ENCODE measurements at regions of chr3 and their contacts with region 1.

Region 1: GRCh38 chr3:100057716-100058575 is 56.4 kb downstream of the FILIP1L start:
- DNase-seq: no peak
- ATAC-seq: no peak
- H3K4me3 Mint-ChIP-seq: no peak overlapping the region
- H3K27ac Mint-ChIP-seq: no peak overlapping the region
- H3K4me1 Mint-ChIP-seq: no peaks in the 10 kb centered on the region
- H3K27me3 Mint-ChIP-seq: no peaks in the 10 kb centered on the region

Region 2: DNA sequence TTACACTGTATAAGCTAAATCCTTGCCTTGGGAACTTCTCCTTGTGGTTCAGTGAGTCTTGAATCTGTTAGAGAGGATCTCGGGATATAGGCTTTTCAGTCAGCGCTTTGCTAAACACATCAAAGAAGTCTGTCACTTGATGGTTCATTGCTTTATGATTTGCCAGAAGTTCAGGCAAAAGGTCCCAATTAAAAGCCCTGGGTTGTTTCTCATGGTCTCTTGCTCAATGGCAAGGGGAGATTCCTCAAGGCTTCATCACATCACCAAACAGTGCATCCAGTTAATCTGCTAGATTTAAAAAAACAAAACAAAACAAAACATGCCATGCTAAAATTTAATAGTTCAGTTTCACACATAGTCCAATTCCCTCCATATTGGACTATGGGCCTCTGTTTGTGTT is 58.4 kb before region 1 on chr3:
- CTCF ChIA-PET with region 1: no interaction called
- POLR2A ChIA-PET with region 1: no interaction called
- intact Hi-C with region 1: loop called in 1 of 2 experiments (anchors 10 kb)
- DNase-seq: no peak
- ATAC-seq: no peak
- H3K4me3 Mint-ChIP-seq: no peak overlapping the region
- H3K27ac Mint-ChIP-seq: no peak overlapping the region
- H3K4me1 Mint-ChIP-seq: peaks cover 10% of the 10 kb centered on the region
- H3K27me3 Mint-ChIP-seq: no peaks in the 10 kb centered on the region

Region 3: DNA sequence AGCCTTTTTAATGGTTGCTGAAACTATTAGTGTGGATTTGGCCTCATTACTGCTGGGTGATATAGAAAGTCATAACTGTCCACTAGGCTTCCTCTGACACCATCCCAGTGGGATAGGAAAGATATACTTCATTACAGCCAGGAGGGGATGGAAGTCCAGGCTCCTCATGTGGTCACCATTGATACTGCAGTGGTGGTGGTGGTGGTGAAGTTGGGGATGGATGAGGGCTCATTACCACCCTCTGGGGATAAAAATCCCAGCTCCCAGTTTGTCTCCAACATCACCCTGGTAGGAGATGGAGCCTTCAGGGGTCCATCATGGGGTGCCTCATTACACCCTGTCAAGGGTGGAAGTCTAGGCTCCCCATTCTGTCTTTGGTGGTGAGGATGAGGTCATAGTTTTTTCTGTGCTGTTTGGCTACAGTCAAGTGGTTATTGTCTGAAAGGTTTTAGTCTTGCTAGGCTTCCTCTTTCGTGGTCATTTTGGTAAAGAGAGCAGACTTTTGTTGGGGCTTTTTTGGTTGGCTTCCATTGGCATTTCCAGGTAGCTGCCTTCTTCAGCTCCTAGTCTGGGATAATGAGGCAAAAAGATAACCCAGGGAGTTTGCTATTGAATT is 86.4 kb after region 1 on chr3:
- CTCF ChIA-PET with region 1: no interaction called
- POLR2A ChIA-PET with region 1: interaction called, 10 read pairs
- intact Hi-C with region 1: no loop called
- DNase-seq: no peak
- ATAC-seq: no peak
- H3K4me3 Mint-ChIP-seq: no peak overlapping the region
- H3K27ac Mint-ChIP-seq: no peak overlapping the region
- H3K4me1 Mint-ChIP-seq: no peaks in the 10 kb centered on the region
- H3K27me3 Mint-ChIP-seq: no peaks in the 10 kb centered on the region

Region 4: DNA sequence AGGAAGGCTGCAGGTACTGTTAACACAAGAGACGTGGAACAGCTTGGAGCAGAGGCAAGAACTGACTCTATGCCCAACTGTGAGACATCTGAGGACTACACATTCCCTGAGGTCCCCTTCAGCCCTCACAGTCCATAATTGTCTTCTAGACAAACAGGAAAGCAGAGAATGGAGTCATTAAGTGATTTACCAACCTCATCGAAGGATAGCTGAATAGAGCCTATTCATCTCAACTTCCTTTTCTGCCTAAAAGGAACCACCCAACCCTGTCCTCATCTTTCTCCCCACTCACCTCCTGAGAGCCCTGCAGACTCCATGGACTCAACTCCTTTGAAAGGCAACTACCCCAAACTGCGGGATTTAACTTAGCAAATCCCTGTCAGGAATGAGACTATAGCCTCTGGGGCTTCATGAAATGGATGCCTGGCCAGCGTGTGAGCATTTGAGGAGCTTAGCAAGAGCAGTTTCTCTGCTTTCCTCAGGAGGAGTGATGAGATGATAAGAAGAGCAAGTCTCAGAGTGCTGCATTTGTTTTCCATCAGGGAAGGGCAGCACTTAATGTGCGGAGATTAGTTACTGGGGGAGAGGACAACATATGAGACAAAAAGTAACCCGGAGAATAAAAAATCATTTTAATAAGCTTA is 117.8 kb after region 1 on chr3:
- CTCF ChIA-PET with region 1: no interaction called
- POLR2A ChIA-PET with region 1: no interaction called
- intact Hi-C with region 1: no loop called
- DNase-seq: no peak
- ATAC-seq: no peak
- H3K4me3 Mint-ChIP-seq: no peak overlapping the region
- H3K27ac Mint-ChIP-seq: no peak overlapping the region
- H3K4me1 Mint-ChIP-seq: no peaks in the 10 kb centered on the region
- H3K27me3 Mint-ChIP-seq: no peaks in the 10 kb centered on the region